ENCODE measurements at regions of chr1 and their contacts with region 1.

Region 1: DNA sequence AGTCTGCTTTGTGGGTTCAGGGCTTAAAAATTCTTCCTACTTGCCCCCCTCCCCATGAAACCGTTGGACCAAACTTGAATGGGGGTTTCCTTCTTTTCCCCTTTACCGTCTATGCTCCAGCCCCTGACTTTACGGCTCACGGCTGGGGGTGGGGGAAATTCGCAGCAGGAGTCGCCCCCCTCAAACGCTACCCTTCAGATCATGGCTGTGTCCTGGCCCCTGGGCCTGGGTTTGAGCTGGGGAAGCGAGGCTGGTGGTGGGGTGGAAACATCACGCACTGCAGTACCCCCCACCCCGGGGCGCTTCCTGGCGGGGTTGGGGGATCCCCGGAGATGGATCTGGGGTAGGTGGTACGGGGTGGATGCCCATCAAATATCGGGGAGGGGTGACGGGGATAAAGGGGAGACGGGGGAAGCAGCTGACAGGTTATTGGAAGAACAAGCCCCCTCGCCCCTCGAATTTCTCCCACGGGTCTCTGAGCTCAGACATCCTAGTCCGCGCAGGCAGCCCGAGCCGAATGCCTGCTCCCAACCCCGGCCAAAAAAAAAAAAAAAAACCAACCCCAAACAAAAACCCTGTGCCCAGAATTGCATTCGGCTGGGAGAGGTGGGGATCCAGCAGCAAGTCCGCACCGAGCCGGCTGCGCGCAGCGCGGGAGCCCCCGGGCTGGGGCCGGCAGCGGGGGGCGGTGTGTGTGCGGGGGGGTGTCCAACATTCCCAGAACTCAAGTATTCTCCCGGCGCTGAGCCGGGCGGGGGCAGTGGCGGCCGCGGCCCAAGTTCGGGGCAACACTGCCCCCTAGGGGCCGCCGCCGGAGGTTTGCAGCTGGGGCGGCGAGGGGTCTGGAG is 59.0 kb upstream of the ACOT11 start:
- DNase-seq: peak; percentile 78 to 84 (median 81)
- H3K4me3 ChIP-seq: peak overlapping the region; percentile 56 to 87 (median 75)
- H3K27ac ChIP-seq: peak overlapping the region; percentile 72 to 91
- H3K4me1 ChIP-seq: peaks cover 9 to 64% (median 56%) of the 10 kb centered on the region in 4 experiments
- H3K27me3 ChIP-seq: no peaks in the 10 kb centered on the region

Region 2: GRCh38 chr1:54360165-54361005 is 128.6 kb before region 1 on chr1:
- CTCF ChIA-PET with region 1: interaction called, 22 read pairs
- POLR2A ChIA-PET with region 1: no interaction called
- DNase-seq: peak in 2 of 3 donors; percentile 31 to 39
- H3K4me3 ChIP-seq: no peak overlapping the region
- H3K27ac ChIP-seq: no peak overlapping the region
- H3K4me1 ChIP-seq: peaks cover 3 to 45% (median 38%) of the 10 kb centered on the region in 4 experiments
- H3K27me3 ChIP-seq: no peaks in the 10 kb centered on the region

Region 3: GRCh38 chr1:54406339-54407153 is 82.5 kb before region 1 on chr1 and contains the start of gene SSBP3:
- CTCF ChIA-PET with region 1: interaction called, 21 read pairs
- POLR2A ChIA-PET with region 1: interaction called, 33 read pairs
- DNase-seq: peak; percentile 93 to 96 (median 94)
- H3K4me3 ChIP-seq: peak within 1 kb of the TSS; percentile 58 to 93 (median 88)
- H3K27ac ChIP-seq: peak within 1 kb of the TSS in 1 of 2 experiments; percentile 89
- H3K4me1 ChIP-seq: peaks cover 6 to 64% (median 58%) of the 10 kb centered on the region in 4 experiments
- H3K27me3 ChIP-seq: no peaks in the 10 kb centered on the region

Region 4: GRCh38 chr1:54474639-54475251 is 14.3 kb before region 1 on chr1:
- CTCF ChIA-PET with region 1: interaction called, 14 read pairs
- POLR2A ChIA-PET with region 1: interaction called, 7 read pairs
- DNase-seq: peak in 2 of 3 donors; percentile 65 to 77
- H3K4me3 ChIP-seq: peak overlapping the region in 6 of 7 experiments; percentile 43 to 73 (median 62)
- H3K27ac ChIP-seq: peak overlapping the region in 1 of 2 experiments; percentile 25
- H3K4me1 ChIP-seq: peaks cover 8 to 72% (median 48%) of the 10 kb centered on the region in 4 experiments
- H3K27me3 ChIP-seq: no peaks in the 10 kb centered on the region

Measured in common myeloid progenitor, CD34-positive (primary cell).